ENCODE measurements at regions of chr14 and their contacts with region 1.

Region 1: GRCh38 chr14:33792720-33793368 is 158.0 kb downstream of the EGLN3 start:
- DNase-seq: peak; percentile 37 to 61
- H3K4me3 ChIP-seq: peak overlapping the region; percentile 40; the same call in 1 of the 2 replicates
- H3K27ac ChIP-seq: no peak overlapping the region
- H3K4me1 ChIP-seq: no peaks in the 10 kb centered on the region; the same call in 1 of the 2 replicates
- H3K27me3 ChIP-seq: no peaks in the 10 kb centered on the region
- CTCF ChIP-seq: peak; percentile 86

Region 2: GRCh38 chr14:32576088-32576795 is 1216.6 kb before region 1 on chr14:
- CTCF ChIA-PET with region 1: no interaction called
- POLR2A ChIA-PET with region 1: no interaction called
- intact Hi-C with region 1: loop called (anchors 2 kb)
- DNase-seq: peak; percentile 15 to 39
- H3K4me3 ChIP-seq: no peak overlapping the region
- H3K27ac ChIP-seq: no peak overlapping the region
- H3K4me1 ChIP-seq: no peaks in the 10 kb centered on the region
- H3K27me3 ChIP-seq: no peaks in the 10 kb centered on the region
- CTCF ChIP-seq: peak; percentile 88

Region 3: DNA sequence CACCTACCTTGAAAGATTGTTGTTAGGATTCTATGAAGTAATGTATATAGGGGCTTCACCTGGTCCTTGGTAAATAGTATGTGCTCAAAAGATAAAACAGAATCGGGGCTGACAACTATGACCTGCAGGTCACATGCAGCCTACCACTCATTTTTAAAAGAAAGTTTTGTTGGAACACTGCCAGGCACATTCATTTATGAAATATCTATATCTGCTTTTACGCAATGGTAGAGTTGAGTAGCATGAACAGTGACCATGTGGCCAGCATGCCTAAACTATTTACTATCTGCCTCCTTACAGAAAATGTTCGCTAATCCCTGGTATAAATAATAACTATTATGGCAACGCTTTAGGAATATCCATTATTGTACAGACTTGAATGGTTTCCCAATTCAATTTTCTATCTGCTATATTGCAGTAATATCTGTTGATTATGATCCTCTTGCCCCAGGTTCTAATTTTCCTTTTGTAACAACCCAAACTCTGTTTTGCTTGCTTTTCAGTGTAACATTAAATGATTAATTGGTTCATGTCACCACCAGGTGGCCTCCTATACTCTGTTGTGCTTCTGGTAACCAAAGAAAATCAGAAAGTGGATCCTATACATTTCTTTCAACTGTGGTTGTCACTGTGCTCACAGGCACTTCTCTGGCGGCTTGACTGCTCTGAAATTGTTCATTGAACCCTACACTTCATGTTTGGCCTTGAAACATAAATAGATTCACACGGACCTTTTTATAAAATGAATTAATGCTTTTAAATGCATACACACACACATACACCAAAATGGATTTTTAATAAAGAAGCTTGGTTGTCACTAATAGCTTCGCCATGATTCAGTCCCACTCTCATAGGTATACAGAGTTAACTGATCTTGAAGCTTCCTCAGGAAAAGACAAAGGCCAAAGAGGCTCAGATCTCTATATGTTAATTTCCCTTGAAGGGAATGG is 1081.8 kb before region 1 on chr14:
- CTCF ChIA-PET with region 1: no interaction called
- POLR2A ChIA-PET with region 1: no interaction called
- intact Hi-C with region 1: loop called (anchors 2 kb)
- DNase-seq: no peak
- H3K4me3 ChIP-seq: no peak overlapping the region
- H3K27ac ChIP-seq: no peak overlapping the region
- H3K4me1 ChIP-seq: no peaks in the 10 kb centered on the region
- H3K27me3 ChIP-seq: no peaks in the 10 kb centered on the region
- CTCF ChIP-seq: peak; percentile 72

Region 4: DNA sequence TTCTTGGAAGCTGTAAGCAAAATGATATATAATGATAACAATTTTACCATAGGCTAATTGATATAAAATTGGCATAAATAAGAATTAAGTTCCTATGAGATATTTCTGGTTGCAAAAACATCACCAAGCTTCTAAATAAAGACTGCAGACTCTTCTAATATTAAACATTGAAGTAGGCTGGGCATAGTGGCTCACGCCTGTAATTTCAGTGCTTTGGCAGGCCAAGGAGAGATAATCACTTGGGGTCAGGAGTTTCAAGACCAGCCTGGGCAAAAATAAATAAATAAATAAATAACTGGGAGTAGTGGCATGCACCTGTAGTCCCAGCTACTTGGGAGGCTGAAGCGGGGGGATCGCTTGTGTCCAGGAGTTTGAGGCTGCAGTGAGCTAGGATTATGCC is 782.3 kb before region 1 on chr14:
- CTCF ChIA-PET with region 1: no interaction called
- POLR2A ChIA-PET with region 1: no interaction called
- intact Hi-C with region 1: no loop called
- DNase-seq: no peak
- H3K4me3 ChIP-seq: no peak overlapping the region
- H3K27ac ChIP-seq: no peak overlapping the region
- H3K4me1 ChIP-seq: no peaks in the 10 kb centered on the region
- H3K27me3 ChIP-seq: no peaks in the 10 kb centered on the region
- CTCF ChIP-seq: no peak

Region 5: DNA sequence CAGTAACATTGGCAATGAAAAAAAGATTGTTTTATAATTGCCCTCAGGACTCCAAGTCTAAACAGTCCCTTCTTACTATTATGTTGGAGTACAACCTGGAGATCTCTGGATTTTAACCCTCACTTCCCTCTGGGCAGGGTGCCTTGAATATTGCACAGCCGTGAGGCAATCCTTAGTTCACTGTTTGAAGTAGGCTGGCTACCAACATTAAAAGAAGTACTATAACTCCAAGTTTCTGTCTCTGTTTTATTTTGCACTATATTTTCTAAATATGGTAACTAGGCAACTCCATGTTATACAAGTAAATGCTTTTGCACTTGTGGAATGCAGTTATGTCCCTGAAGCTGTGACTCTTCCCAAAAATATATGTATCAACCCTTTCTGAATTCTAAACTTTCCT is 332.7 kb before region 1 on chr14:
- CTCF ChIA-PET with region 1: no interaction called
- POLR2A ChIA-PET with region 1: no interaction called
- intact Hi-C with region 1: no loop called
- DNase-seq: no peak
- H3K4me3 ChIP-seq: no peak overlapping the region
- H3K27ac ChIP-seq: no peak overlapping the region
- H3K4me1 ChIP-seq: no peaks in the 10 kb centered on the region
- H3K27me3 ChIP-seq: no peaks in the 10 kb centered on the region
- CTCF ChIP-seq: no peak

Region 6: GRCh38 chr14:33475623-33476022 is 317.2 kb before region 1 on chr14:
- CTCF ChIA-PET with region 1: no interaction called
- POLR2A ChIA-PET with region 1: no interaction called
- intact Hi-C with region 1: loop called (anchors 5 kb)
- DNase-seq: peak; percentile 46 to 60
- H3K4me3 ChIP-seq: no peak overlapping the region
- H3K27ac ChIP-seq: no peak overlapping the region
- H3K4me1 ChIP-seq: peaks cover 11% of the 10 kb centered on the region; the same call in 1 of the 2 replicates
- H3K27me3 ChIP-seq: no peaks in the 10 kb centered on the region
- CTCF ChIP-seq: peak; percentile 50

Region 7: DNA sequence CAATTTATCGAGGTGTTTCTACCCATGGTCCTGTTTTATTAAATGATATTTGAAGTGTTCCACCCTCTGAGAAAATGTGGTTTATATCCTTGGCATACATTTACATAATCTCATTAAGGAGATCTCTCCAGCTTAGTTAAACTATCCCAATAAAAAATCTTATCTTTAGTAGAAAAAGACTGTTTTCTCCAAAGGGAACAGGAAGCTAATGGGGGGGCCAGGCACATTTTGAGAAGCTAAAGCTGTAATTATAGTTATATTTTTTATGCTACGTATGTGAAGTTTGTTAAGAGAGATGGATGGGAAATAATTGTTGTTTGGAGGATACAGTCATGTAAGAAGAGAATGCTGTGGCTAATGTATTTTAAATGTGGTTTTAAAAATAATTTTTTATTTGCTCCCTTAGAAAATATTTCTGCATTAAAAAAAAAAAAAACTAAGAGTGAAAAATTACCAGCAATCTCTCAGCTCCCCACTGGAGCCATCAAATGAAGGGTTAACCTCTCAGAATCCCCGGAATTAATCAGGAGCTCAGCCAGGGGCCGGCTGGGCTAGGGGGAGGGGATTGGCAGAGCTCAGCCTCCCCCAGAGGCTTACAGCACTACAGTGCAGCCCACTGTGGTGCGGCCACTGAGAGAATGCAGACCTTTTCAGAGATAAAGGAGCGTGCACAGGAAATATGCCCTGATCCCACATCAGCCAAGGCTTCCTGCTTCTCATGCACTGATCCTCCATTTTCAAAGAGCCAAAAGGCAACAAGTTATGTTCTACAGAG is 27.8 kb before region 1 on chr14:
- CTCF ChIA-PET with region 1: no interaction called
- POLR2A ChIA-PET with region 1: no interaction called
- intact Hi-C with region 1: no loop called
- DNase-seq: no peak
- H3K4me3 ChIP-seq: no peak overlapping the region
- H3K27ac ChIP-seq: no peak overlapping the region
- H3K4me1 ChIP-seq: no peaks in the 10 kb centered on the region
- H3K27me3 ChIP-seq: no peaks in the 10 kb centered on the region
- CTCF ChIP-seq: no peak

Region 8: DNA sequence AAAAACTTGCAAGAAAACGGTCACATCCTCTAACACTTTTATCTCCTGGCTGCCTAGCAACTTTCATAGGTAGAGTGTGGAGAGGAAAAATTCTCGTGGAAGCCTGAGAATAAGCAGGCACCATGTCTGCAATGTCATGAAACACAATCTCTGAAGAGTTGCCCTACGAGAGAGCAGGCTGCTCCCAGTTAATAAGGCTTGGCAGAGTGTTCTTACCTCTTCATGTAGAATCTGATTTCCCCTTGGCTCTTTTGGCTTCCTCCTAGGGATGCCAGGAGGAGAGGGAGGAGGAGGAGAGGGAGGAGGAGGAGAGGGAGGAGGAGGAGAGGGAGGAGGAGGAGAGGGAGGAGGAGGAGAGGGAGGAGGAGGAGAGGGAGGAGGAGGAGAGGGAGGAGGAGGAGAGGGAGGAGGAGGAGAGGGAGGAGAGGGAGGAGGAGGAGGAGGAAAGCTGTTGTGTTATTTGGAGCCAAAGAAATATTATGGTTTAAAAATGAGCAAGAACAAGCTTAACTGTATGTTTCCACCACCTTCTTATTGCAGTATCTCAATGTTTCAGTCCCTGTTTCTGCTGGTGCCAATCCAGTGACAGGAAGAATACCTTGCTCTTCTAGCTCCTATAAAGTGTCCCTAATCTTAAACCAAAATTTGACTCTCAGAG is 105.2 kb after region 1 on chr14:
- CTCF ChIA-PET with region 1: no interaction called
- POLR2A ChIA-PET with region 1: no interaction called
- intact Hi-C with region 1: no loop called
- DNase-seq: no peak
- H3K4me3 ChIP-seq: no peak overlapping the region
- H3K27ac ChIP-seq: no peak overlapping the region
- H3K4me1 ChIP-seq: no peaks in the 10 kb centered on the region
- H3K27me3 ChIP-seq: no peaks in the 10 kb centered on the region
- CTCF ChIP-seq: no peak